ENCODE measurements at regions of chr17 and their contacts with region 1.

Region 1: GRCh38 chr17:7915611-7916382 is at the start of gene RNF227:
- DNase-seq: peak; percentile 72 to 89 (median 84)
- H3K4me3 ChIP-seq: peak within 1 kb of the TSS; percentile 75
- H3K4me3 Mint-ChIP-seq: peak within 1 kb of the TSS; percentile 78 to 95 (median 89)
- H3K27ac ChIP-seq: peak within 1 kb of the TSS; percentile 43
- H3K27ac Mint-ChIP-seq: peak within 1 kb of the TSS; percentile 83 to 98 (median 92)
- H3K4me1 ChIP-seq: peaks cover 30% of the 10 kb centered on the region
- H3K4me1 Mint-ChIP-seq: peaks cover 27 to 29% (median 29%) of the 10 kb centered on the region in 3 donors
- H3K27me3 ChIP-seq: no peaks in the 10 kb centered on the region
- H3K27me3 Mint-ChIP-seq: no peaks in the 10 kb centered on the region
- total RNA-seq, gene RNF227: 4.4 to 4.8 TPM

Region 2: DNA sequence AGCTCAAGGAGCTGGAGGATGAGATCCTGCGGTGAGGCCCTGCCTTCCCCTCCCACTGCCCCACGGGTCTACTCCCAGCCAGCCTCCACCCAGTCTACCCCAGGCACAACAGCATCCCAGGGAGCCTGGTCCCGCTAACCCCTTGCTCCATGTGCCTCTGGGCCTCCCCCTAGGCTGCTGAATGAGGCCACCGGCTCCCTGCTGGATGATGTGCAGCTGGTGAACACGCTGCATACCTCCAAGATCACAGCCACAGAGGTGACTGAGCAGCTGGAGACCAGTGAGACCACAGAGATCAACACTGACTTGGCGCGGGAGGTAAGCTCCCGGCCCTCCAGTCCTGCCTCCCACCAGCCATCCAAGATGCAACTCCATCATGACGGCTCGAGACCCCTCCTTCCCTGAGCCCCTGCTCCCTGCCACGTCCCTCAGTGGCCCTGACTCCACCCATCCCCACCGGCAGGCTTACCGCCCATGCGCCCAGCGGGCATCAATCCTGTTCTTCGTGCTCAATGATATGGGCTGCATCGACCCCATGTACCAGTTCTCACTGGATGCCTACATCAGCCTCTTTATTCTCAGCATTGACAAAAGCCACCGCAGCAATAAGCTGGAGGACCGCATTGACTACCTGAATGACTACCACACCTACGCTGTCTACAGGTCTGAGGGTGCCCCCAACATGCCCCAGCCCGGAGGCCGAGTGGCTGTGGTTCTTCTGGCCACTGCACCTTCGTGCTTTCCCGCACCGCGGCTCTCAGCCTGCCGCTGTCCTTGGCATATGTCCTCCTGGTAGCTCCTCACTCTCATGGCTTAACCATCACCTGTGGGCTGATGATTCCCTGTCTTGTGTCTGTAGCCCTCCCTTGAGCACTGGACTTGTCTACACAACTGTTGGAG is 96.8 kb before region 1 on chr17:
- CTCF ChIA-PET with region 1: no interaction called
- POLR2A ChIA-PET with region 1: no interaction called
- DNase-seq: no peak
- H3K4me3 ChIP-seq: no peak overlapping the region
- H3K4me3 Mint-ChIP-seq: no peak overlapping the region
- H3K27ac ChIP-seq: no peak overlapping the region
- H3K27ac Mint-ChIP-seq: no peak overlapping the region
- H3K4me1 ChIP-seq: no peaks in the 10 kb centered on the region
- H3K4me1 Mint-ChIP-seq: no peaks in the 10 kb centered on the region
- H3K27me3 ChIP-seq: no peaks in the 10 kb centered on the region
- H3K27me3 Mint-ChIP-seq: peaks cover 0 to 1% of the 10 kb centered on the region in 2 donors

Region 3: DNA sequence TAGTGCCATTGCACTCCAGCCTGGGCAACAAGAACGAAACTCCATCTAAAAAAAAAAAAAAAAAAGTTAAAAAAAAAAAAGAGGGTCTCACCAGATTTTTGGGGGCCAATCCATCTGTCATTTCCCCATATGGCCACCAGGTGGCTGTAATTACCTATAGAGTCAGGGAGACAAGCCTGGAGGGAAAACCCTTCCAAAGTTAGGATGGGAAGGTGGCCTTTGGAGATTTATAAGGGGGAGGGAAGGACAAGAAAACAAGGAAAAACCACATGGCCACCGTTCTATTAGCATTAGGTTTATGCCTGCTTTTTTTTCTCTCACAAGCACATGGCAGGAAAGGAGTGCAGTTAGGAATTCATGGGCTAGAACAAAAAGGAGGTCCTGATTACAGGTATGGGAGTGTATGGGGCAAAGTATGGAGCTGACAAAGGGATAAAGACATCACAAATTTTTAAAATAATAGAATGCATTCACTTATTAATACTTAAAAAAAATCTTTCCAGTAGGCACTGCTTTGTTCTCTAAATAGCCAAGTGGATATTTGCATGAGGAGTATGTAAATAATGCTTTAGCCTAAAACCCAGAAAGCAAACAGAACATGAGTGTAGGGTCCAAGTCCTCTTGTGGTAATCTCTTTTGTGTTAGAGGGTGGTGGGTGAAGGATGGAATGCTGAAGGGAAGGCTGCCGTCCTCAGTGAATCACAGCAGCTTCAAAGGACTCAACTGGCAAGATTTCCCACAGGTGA is 52.9 kb before region 1 on chr17:
- CTCF ChIA-PET with region 1: interaction called, 13 read pairs
- POLR2A ChIA-PET with region 1: interaction called, 4 read pairs
- DNase-seq: peak in 4 of 5 donors; percentile 49 to 70 (median 60)
- H3K4me3 ChIP-seq: no peak overlapping the region
- H3K4me3 Mint-ChIP-seq: no peak overlapping the region
- H3K27ac ChIP-seq: no peak overlapping the region
- H3K27ac Mint-ChIP-seq: peak overlapping the region in 3 of 8 donors; percentile 12 to 58 (median 40)
- H3K4me1 ChIP-seq: peaks cover 17% of the 10 kb centered on the region
- H3K4me1 Mint-ChIP-seq: peaks cover 17 to 18% (median 17%) of the 10 kb centered on the region in 3 donors
- H3K27me3 ChIP-seq: no peaks in the 10 kb centered on the region
- H3K27me3 Mint-ChIP-seq: no peaks in the 10 kb centered on the region

Region 4: GRCh38 chr17:7931709-7932482 is 16.1 kb after region 1 on chr17 and contains the starts of genes CNTROB and TRAPPC1:
- CTCF ChIA-PET with region 1: interaction called, 20 read pairs
- POLR2A ChIA-PET with region 1: interaction called, 15 read pairs
- DNase-seq: peak; percentile 99 to 100 (median 99)
- H3K4me3 ChIP-seq: peak within 1 kb of the TSS; percentile 97
- H3K4me3 Mint-ChIP-seq: peak within 1 kb of the TSS; percentile 88 to 99 (median 96)
- H3K27ac ChIP-seq: peak within 1 kb of the TSS; percentile 92
- H3K27ac Mint-ChIP-seq: peak within 1 kb of the TSS; percentile 74 to 99 (median 98)
- H3K4me1 ChIP-seq: peaks cover 34% of the 10 kb centered on the region
- H3K4me1 Mint-ChIP-seq: peaks cover 43 to 59% (median 54%) of the 10 kb centered on the region in 3 donors
- H3K27me3 ChIP-seq: no peaks in the 10 kb centered on the region
- H3K27me3 Mint-ChIP-seq: peaks cover 0 to 2% of the 10 kb centered on the region in 2 donors
- total RNA-seq, gene CNTROB: 44.3 to 46.8 TPM
- total RNA-seq, gene TRAPPC1: 158 TPM

Measured in CD8-positive, alpha-beta memory T cell (primary cell).